Breast epithelium (tissue), 4 donors: ENCODE measurements at regions of chr13 and their contacts with region 1.

Region 1: DNA sequence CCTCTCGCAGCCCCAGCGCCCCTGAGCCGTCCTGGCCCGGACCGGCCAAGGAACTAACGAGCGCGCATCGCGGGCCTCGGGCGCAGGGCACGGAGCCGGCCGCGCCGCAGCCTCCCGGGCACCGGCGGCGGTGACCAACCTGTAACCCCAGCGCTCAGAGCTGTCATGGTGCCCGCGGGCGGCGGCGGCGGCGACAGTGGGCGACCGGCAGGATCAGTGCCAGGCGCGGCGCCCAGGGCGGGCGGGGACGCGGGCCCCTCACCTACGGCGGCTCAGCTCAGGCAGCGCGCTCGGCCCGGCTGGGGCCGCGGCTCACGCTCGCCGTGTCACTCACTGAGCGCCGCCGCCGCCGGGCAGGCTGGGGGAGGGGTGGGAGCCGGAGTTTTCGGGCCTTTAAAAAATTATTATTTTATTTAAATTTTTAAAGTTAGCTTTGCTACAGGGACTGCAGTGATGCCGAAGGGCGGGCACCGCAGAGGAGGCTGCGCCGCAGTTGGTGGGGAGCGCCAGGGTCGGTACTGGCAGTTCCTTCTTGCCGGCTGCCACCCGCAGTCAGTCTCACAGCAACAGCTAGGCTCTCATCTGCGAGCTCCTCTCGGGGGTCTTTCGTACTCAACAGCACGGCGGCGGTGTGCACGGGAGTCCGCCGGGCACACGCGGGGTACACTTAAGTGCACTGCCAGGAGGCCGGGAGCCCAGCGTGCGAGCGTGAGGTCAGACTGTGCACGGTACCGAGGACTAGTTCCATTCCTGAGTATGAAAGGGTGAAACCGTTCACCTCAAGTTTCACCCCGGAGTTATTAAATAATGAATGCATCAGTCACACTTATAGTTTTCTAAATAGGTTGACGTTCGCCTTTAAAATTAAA is at the start of gene NALCN:
- DNase-seq: no peak
- H3K4me3 ChIP-seq: peak within 1 kb of the TSS; percentile 41 to 72 (median 60)
- H3K27ac ChIP-seq: peak within 1 kb of the TSS; percentile 67 to 71
- H3K4me1 ChIP-seq: no peaks in the 10 kb centered on the region
- H3K27me3 ChIP-seq: peaks cover 0 to 10% of the 10 kb centered on the region in 2 donors
- CTCF ChIP-seq: no peak
- POLR2A ChIP-seq: no peak
- total RNA-seq, gene NALCN: 0.80 to 12.1 (median 1.6) TPM

Region 2: GRCh38 chr13:101465877-101466276 is 49.5 kb after region 1 on chr13:
- intact Hi-C with region 1: loop called (anchors 10 kb)
- DNase-seq: no peak
- H3K4me3 ChIP-seq: no peak overlapping the region
- H3K27ac ChIP-seq: no peak overlapping the region
- H3K4me1 ChIP-seq: no peaks in the 10 kb centered on the region
- H3K27me3 ChIP-seq: no peaks in the 10 kb centered on the region
- CTCF ChIP-seq: no peak
- POLR2A ChIP-seq: no peak

Region 3: DNA sequence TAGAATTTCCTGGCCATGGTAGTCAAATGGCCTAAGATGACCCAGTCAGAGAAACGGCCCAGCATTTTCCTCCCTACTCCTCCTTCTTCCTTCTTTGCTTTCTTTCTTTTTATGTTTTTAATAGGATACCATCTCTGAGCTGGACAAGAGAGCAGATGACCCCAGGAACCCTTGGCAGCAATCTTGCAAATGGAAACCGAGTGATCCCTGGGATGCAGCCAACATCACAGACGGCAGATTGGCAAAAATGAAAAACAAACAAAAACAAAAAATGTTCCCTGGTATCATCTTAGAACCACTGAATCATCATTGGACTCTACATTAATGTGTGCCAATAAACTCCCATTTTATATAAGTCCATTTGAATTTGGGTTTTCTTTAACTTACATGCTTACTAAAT is 561.1 kb after region 1 on chr13:
- intact Hi-C with region 1: no loop called
- DNase-seq: no peak
- H3K4me3 ChIP-seq: no peak overlapping the region
- H3K27ac ChIP-seq: no peak overlapping the region
- H3K4me1 ChIP-seq: no peaks in the 10 kb centered on the region
- H3K27me3 ChIP-seq: no peaks in the 10 kb centered on the region
- CTCF ChIP-seq: no peak
- POLR2A ChIP-seq: no peak